Activated T-helper 1 cell treated with anti-CD3 and anti-CD28 coated beads, Interleukin-12 subunit alpha, Interleukin-12 subunit beta, Interleukin-2, Interleukin-4 antibody, amounts not matched to agents 30 ng/mL and 10 ng/mL and 1 ng/mL, durations not matched to agents 14 hours and 24 hours and 36 hours (primary cell): ENCODE measurements at regions of chr2 and their contacts with region 1.

Region 1: DNA sequence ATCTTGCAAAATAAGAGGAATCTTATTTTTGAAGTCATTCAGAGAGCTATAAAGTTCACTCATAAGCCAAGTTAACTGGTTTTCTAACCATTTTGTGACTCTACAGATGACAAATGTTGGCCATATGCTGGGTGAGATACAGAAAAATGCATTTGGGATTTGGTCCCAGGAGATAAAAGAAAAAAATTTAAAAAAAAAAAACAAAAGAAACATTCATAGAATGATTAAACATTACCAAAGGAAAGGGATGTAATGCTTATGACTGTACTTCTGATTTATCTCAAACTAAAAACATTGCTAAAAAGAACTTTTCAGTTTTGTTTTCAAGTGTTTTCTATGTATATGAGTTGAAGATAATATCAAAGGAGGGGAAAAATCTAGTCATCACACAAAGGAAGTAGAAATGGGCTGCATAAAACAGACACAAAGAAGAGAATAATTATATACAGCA is 43.1 kb downstream of the PELI1 start:
- DNase-seq: no peak
- H3K4me3 Mint-ChIP-seq: no peak overlapping the region
- H3K27ac Mint-ChIP-seq: peak overlapping the region; percentile 76
- H3K4me1 Mint-ChIP-seq: peaks cover 54% of the 10 kb centered on the region
- H3K27me3 Mint-ChIP-seq: no peaks in the 10 kb centered on the region

Region 2: DNA sequence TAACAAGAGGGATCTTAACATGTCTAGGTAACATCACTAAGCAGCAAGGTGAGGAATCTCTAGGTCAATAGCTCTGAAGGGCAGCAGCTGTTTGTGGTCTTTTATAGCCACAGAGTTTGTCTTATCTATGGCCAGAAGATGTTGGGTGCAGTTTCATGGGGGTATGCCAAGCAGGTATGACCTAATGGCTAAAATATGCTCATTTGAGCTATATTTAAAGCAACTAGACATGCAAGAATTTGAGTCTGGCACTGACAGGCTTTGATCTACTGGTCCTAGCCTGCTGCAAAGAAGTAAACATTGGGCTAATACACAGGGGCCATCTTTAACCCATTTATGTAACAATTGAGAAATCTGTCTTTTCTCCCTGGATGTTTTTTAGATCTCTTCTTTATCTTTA is 273.4 kb before region 1 on chr2:
- intact Hi-C with region 1: no loop called
- DNase-seq: no peak
- H3K4me3 Mint-ChIP-seq: no peak overlapping the region
- H3K27ac Mint-ChIP-seq: no peak overlapping the region
- H3K4me1 Mint-ChIP-seq: no peaks in the 10 kb centered on the region
- H3K27me3 Mint-ChIP-seq: peaks cover 31% of the 10 kb centered on the region

Region 3: GRCh38 chr2:64018923-64019718 is 82.0 kb before region 1 on chr2 and contains the start of gene VPS54:
- intact Hi-C with region 1: loop called (anchors 1 kb)
- DNase-seq: peak; percentile 53
- H3K4me3 Mint-ChIP-seq: peak within 1 kb of the TSS; percentile 94
- H3K27ac Mint-ChIP-seq: peak within 1 kb of the TSS; percentile 97
- H3K4me1 Mint-ChIP-seq: peaks cover 43% of the 10 kb centered on the region
- H3K27me3 Mint-ChIP-seq: no peaks in the 10 kb centered on the region
- total RNA-seq, gene VPS54: 14.9 and 15.4 TPM in 2 replicates

Region 4: GRCh38 chr2:64086347-64087082 is 14.7 kb before region 1 on chr2:
- intact Hi-C with region 1: no loop called
- DNase-seq: no peak
- H3K4me3 Mint-ChIP-seq: no peak overlapping the region
- H3K27ac Mint-ChIP-seq: no peak overlapping the region
- H3K4me1 Mint-ChIP-seq: peaks cover 11% of the 10 kb centered on the region
- H3K27me3 Mint-ChIP-seq: peaks cover 6% of the 10 kb centered on the region

Region 5: DNA sequence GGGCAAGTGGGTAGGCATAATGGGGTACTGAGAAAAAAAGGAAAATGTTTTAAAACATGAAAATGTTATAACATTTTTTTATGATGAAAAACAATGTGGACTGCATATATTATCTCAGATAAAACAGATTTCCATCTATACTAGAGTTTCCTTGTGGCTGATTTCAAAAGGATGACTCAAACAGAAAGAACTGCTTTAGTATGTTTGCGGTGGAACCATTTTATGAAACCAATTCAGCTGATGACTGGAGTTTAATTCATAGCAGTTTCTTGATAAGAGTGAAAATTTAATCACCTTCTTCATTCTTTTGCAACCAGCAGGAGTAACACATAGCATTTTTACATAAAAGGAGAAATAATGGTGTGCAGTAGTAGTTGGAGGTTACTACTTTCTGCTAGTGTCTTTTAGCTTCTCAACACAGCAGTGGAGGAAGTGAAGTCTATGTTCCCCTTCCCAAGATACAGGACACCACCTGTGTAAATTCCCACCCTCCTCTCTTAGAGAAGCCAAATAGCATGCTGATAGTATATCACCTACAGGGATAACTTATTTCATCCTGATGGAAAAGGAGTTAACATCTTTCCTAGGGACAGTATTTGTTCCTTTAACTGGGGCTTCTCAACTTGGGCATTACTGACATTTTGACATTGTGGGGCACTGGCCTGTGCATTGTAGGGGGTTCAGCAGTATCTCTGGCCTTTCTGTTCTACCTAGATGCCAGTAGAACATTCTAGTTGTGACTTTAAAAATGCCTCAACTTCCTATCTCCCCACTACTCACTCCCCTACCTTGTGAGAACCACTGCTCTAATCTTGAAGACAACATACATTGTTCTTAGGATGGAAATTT is 13.1 kb after region 1 on chr2:
- intact Hi-C with region 1: loop called (anchors 1 kb)
- DNase-seq: no peak
- H3K4me3 Mint-ChIP-seq: peak overlapping the region; percentile 17
- H3K27ac Mint-ChIP-seq: peak overlapping the region; percentile 59
- H3K4me1 Mint-ChIP-seq: peaks cover 73% of the 10 kb centered on the region
- H3K27me3 Mint-ChIP-seq: no peaks in the 10 kb centered on the region

Region 6: GRCh38 chr2:64144057-64145013 is 43.2 kb after region 1 on chr2 and contains the start of gene PELI1:
- intact Hi-C with region 1: loop called (anchors 1 kb)
- DNase-seq: peak; percentile 90
- H3K4me3 Mint-ChIP-seq: peak within 1 kb of the TSS; percentile 98
- H3K27ac Mint-ChIP-seq: peak within 1 kb of the TSS; percentile 97
- H3K4me1 Mint-ChIP-seq: peaks cover 28% of the 10 kb centered on the region
- H3K27me3 Mint-ChIP-seq: peaks cover 3% of the 10 kb centered on the region
- total RNA-seq, gene PELI1: 47.1 and 50.4 TPM in 2 replicates

Region 7: GRCh38 chr2:64203858-64204632 is 102.9 kb after region 1 on chr2:
- intact Hi-C with region 1: loop called (anchors 1 kb)
- DNase-seq: peak; percentile 49
- H3K4me3 Mint-ChIP-seq: peak overlapping the region; percentile 76
- H3K27ac Mint-ChIP-seq: peak overlapping the region; percentile 91
- H3K4me1 Mint-ChIP-seq: peaks cover 84% of the 10 kb centered on the region
- H3K27me3 Mint-ChIP-seq: no peaks in the 10 kb centered on the region

Region 8: GRCh38 chr2:64653349-64654062 is 552.3 kb after region 1 on chr2 and contains the start of gene SERTAD2:
- intact Hi-C with region 1: loop called (anchors 5 kb)
- DNase-seq: peak; percentile 83
- H3K4me3 Mint-ChIP-seq: peak within 1 kb of the TSS; percentile 90
- H3K27ac Mint-ChIP-seq: peak within 1 kb of the TSS; percentile 90
- H3K4me1 Mint-ChIP-seq: peaks cover 71% of the 10 kb centered on the region
- H3K27me3 Mint-ChIP-seq: no peaks in the 10 kb centered on the region
- total RNA-seq, gene SERTAD2: 27.3 and 28.5 TPM in 2 replicates